Activated CD4-positive, alpha-beta T cell treated with anti-CD3 and anti-CD28 coated beads for 36 hours (primary cell): ENCODE measurements at regions of chr15 and their contacts with region 1.

Region 1: GRCh38 chr15:85858586-85859375 is 64.1 kb upstream of the KLHL25 start:
- DNase-seq: peak; percentile 89
- ATAC-seq: peak; percentile 95
- H3K4me3 Mint-ChIP-seq: peak overlapping the region; percentile 32
- H3K27ac Mint-ChIP-seq: no peak overlapping the region
- H3K4me1 Mint-ChIP-seq: peaks cover 5% of the 10 kb centered on the region
- H3K27me3 Mint-ChIP-seq: peaks cover 26% of the 10 kb centered on the region

Region 2: GRCh38 chr15:86183596-86184491 is 325.1 kb after region 1 on chr15:
- CTCF ChIA-PET with region 1: no interaction called
- POLR2A ChIA-PET with region 1: no interaction called
- intact Hi-C with region 1: loop called in 1 of 2 experiments (anchors 5 kb)
- DNase-seq: peak; percentile 67
- ATAC-seq: peak; percentile 93
- H3K4me3 Mint-ChIP-seq: no peak overlapping the region
- H3K27ac Mint-ChIP-seq: no peak overlapping the region
- H3K4me1 Mint-ChIP-seq: peaks cover 11% of the 10 kb centered on the region
- H3K27me3 Mint-ChIP-seq: peaks cover 22% of the 10 kb centered on the region

Region 3: GRCh38 chr15:86624261-86625036 is 765.7 kb after region 1 on chr15:
- CTCF ChIA-PET with region 1: interaction called, 3 read pairs
- POLR2A ChIA-PET with region 1: no interaction called
- intact Hi-C with region 1: loop called in 1 of 2 experiments (anchors 10 kb)
- DNase-seq: peak; percentile 90
- ATAC-seq: peak; percentile 100
- H3K4me3 Mint-ChIP-seq: peak overlapping the region; percentile 15
- H3K27ac Mint-ChIP-seq: peak overlapping the region; percentile 53
- H3K4me1 Mint-ChIP-seq: peaks cover 42% of the 10 kb centered on the region
- H3K27me3 Mint-ChIP-seq: peaks cover 4% of the 10 kb centered on the region

Region 4: DNA sequence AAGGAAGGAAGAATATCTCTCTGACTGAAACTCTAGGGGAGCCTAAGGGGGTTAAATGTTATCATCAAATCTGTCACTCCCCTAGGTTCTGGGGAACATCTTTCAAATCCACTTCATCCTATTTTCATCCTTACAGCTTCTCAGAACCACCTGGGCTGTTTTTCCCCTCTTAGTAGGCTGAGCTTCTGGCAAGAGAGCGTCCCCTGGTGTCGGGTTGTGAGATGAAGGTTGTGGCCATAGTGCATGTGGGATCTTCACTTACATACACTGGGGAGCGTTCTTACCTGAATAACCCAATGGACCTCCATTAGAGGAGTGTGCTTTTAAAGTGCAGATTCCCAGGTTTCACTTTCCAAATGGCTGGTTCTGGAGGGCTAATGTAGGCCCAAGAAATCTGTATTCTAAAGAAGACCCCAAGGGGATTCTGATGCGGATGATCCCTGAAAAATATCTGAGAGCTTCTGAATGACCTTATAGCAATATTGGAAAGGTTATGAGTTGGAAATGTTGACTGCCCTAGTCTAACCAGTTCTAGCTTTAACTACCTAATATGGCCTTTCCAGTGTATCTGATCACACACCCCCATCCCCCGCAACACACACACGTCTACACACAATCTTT is 884.6 kb after region 1 on chr15:
- CTCF ChIA-PET with region 1: interaction called, 4 read pairs
- POLR2A ChIA-PET with region 1: no interaction called
- intact Hi-C with region 1: loop called in 1 of 2 experiments (anchors 5 kb)
- DNase-seq: peak; percentile 77
- ATAC-seq: peak; percentile 70
- H3K4me3 Mint-ChIP-seq: no peak overlapping the region
- H3K27ac Mint-ChIP-seq: no peak overlapping the region
- H3K4me1 Mint-ChIP-seq: peaks cover 2% of the 10 kb centered on the region
- H3K27me3 Mint-ChIP-seq: no peaks in the 10 kb centered on the region